ENCODE measurements at regions of chr7 and their contacts with region 1.

Region 1: DNA sequence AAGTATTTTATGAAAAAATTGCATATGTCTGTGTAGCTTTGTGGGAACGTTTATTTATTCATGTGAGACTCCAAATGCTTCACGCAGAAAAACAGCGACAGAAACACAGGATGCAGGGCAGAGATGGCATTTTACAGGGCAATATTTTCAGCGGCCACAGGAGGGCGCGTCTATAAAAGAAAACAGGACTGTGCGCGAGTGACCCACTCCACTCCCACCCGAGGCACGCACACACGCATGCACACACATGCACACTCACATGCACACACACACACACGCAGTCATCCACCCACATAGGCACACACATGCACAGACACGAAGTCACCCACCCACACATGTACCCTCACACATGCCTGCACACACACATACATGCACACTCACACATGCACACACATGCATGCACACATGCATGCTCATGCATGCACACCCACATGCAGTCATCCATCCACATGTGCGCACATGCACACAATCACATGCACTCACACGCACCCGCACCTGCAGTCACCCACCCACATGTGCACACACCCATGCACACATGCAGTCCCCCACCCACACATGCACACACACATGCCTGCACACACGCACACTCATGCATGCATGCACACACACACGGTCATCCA is 96.3 kb downstream of the DNAJB6 start:
- DNase-seq: peak; percentile 77
- ATAC-seq: peak; percentile 67
- H3K4me3 Mint-ChIP-seq: peak overlapping the region; percentile 41
- H3K27ac Mint-ChIP-seq: no peak overlapping the region
- H3K4me1 Mint-ChIP-seq: peaks cover 13% of the 10 kb centered on the region
- H3K27me3 Mint-ChIP-seq: no peaks in the 10 kb centered on the region

Region 2: GRCh38 chr7:157418204-157419034 is 14.6 kb before region 1 on chr7:
- CTCF ChIA-PET with region 1: no interaction called
- POLR2A ChIA-PET with region 1: no interaction called
- intact Hi-C with region 1: no loop called
- DNase-seq: no peak
- ATAC-seq: no peak
- H3K4me3 Mint-ChIP-seq: no peak overlapping the region
- H3K27ac Mint-ChIP-seq: no peak overlapping the region
- H3K4me1 Mint-ChIP-seq: no peaks in the 10 kb centered on the region
- H3K27me3 Mint-ChIP-seq: no peaks in the 10 kb centered on the region

Region 3: DNA sequence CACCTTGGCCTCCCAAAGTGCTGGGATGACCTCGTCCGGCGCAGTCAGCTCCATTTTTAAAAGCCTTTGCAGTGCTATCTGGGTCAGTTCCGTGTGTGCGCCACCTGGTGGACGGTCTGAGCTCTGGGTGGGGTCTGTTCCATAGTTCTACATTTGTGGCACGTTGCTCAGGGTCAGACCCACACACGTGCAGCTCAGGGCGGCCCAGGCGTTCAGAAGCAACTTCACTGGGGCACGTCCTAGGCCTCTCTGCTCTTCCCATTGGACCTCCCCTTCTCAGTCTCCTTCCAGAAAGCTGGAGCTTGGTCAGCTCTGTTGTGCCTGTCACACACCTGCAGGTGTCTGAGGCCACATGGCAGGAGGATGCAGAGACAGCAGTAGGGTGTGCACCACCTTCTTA is 41.6 kb after region 1 on chr7:
- CTCF ChIA-PET with region 1: interaction called, 7 read pairs
- POLR2A ChIA-PET with region 1: no interaction called
- intact Hi-C with region 1: loop called in 1 of 2 experiments (anchors 5 kb)
- DNase-seq: peak; percentile 62
- ATAC-seq: no peak
- H3K4me3 Mint-ChIP-seq: no peak overlapping the region
- H3K27ac Mint-ChIP-seq: no peak overlapping the region
- H3K4me1 Mint-ChIP-seq: peaks cover 53% of the 10 kb centered on the region
- H3K27me3 Mint-ChIP-seq: no peaks in the 10 kb centered on the region

Region 4: DNA sequence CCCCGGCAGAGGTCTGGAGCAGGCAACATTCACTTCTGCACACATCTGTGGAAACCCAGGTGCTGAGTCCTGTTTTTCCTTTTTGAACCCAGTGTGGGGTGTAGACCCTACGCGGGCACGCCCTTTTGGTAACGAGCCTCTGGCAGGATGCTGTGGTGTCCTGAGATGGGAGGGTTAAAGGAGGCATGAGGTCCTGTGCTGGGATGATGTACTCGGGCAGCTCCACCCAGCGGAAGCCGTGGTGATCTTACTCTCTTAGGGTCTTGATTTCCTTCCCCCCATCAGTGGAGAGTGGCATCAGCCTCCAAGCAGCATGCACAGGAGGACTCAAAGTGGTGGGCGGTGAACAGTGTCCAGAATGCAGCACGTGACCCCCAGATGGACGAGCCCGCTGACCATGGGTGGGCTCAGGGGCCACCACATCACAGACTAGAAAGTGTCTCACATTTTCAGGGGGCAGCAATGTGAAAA is 52.3 kb after region 1 on chr7:
- CTCF ChIA-PET with region 1: no interaction called
- POLR2A ChIA-PET with region 1: no interaction called
- intact Hi-C with region 1: no loop called
- DNase-seq: no peak
- ATAC-seq: no peak
- H3K4me3 Mint-ChIP-seq: no peak overlapping the region
- H3K27ac Mint-ChIP-seq: no peak overlapping the region
- H3K4me1 Mint-ChIP-seq: peaks cover 11% of the 10 kb centered on the region
- H3K27me3 Mint-ChIP-seq: no peaks in the 10 kb centered on the region

Region 5: DNA sequence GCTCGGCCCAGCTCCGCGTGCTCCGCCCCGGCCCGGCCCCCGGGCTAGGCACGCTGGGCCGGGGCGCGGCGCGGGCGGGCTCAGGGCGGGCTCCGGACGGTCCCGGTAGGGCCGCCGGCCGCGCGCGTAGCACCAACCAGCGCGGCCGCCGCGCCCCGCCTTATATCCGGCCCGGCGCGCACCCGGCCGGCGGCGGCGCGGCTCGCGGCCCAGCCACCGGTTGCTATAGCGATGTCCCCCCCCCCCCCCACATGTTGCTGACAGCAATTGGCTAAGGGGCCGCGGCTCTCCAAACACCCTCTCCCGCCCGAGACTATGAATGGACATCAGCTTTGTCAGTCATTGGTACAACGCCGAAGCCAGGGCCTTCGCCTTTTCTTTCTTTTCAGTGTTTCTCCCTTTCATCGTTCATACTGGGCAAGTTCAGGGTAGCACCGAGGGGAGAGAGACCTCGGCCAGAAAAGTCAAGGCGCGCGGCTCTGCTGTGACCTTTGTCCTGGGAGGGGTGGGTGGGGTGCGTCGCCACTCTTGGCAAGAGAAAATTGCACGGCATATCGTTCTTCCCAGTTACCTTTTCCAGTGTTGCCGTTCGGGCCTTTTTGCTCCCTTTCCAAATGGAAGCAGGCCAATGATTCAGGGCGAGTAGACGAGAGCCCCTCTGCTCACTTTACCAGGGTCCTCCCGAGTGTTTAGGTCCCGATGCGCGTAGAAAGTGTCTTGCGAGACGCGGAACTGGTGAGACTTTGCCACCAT is 257.9 kb after region 1 on chr7:
- CTCF ChIA-PET with region 1: no interaction called
- POLR2A ChIA-PET with region 1: no interaction called
- intact Hi-C with region 1: loop called in 1 of 2 experiments (anchors 1 kb)
- DNase-seq: no peak
- ATAC-seq: peak; percentile 47
- H3K4me3 Mint-ChIP-seq: peak overlapping the region; percentile 19
- H3K27ac Mint-ChIP-seq: no peak overlapping the region
- H3K4me1 Mint-ChIP-seq: peaks cover 18% of the 10 kb centered on the region
- H3K27me3 Mint-ChIP-seq: peaks cover 49% of the 10 kb centered on the region

Region 6: DNA sequence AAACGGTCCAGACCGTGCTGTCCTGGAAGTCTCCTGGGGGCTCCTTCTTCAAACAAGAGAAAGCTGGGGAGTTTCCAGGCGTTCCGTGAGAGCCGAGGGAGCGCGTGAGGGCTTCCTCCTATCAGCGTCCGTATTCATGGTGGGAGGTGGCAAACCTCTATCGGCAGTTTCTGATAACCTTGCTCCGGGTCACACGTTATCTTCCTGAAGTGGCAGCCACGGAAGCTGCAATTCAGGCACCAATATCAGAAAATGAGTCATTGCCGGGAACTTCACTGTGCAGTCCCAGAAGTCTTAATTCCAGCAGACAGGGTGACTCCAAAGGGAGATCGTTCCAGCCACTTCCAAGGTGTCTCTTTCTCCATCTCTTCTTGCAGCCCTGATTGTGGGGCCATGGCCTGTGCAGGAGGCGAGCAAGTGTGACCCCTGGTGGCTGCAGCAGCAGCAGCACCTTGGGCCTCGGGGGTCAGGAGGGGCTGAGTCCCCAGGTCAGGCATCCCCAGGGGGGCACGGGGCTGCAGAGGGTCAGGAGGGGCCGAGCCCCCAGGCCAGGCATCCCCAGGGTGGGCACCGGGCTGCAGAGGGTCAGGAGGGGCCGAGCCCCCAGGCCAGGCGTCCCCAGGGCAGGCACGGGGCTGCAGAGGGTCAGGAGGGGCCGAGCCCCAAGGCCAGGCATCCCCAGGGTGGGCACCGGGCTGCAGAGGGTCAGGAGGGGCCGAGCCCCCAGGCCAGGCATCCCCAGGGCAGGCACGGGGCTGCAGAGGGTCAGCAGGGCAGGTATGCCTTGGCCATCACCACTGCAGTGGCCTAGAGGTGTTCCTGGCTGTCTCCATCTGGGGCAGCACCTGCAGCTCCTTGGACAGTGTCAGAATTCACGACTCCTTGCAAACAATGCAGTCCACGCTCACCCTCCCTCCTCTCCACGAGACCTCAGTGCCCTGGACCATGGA is 442.4 kb after region 1 on chr7:
- CTCF ChIA-PET with region 1: interaction called, 8 read pairs
- POLR2A ChIA-PET with region 1: no interaction called
- intact Hi-C with region 1: loop called (anchors 1 kb)
- DNase-seq: peak; percentile 76
- ATAC-seq: peak; percentile 83
- H3K4me3 Mint-ChIP-seq: peak overlapping the region; percentile 57
- H3K27ac Mint-ChIP-seq: peak overlapping the region; percentile 2
- H3K4me1 Mint-ChIP-seq: peaks cover 29% of the 10 kb centered on the region
- H3K27me3 Mint-ChIP-seq: peaks cover 2% of the 10 kb centered on the region

Region 7: DNA sequence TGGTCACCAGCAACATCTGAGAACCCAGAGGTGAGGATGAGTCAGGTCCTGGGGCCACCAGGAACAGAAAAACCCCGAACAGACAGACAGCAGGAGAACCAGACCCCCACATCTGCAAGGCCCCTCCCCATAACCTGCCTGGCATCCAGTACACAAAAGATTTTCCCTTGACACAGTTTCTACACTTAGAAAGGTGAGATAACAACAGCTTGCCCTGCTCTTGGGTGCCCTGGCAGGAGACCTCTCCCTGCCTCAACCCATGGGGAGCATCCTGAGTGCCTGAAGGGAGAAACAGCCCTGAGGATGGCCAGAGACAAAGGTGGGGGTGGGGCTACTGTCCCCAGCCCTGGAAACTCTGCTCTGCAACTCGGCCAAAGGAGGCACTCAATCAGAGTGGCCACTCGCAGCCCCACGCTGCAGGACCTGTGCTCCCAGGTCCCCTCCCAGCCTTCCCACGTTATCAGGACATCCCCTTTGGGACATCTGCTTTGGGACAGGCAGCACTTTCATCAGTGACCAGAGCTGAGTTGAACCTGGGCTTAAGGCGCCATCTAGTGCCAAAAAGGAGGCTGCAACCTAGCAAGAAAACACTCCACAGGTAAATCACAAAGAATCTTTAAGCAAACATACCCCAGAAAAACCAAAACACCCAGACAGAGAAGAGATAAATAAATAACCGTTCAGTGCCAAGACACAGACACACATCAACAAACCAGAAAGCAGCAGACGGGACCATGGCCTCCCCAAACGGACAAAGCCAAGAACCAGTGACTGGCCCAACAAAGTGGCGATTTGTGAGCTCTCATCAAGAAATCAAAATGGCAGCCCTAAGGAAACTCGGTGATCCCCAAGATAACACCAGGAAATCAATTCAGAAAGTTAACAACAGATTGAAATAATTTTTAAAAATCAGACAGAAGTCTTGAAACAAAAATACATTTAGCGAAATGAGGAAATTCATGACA is 920.8 kb after region 1 on chr7:
- CTCF ChIA-PET with region 1: no interaction called
- POLR2A ChIA-PET with region 1: no interaction called
- intact Hi-C with region 1: loop called in 1 of 2 experiments (anchors 5 kb)
- DNase-seq: peak; percentile 39
- ATAC-seq: no peak
- H3K4me3 Mint-ChIP-seq: no peak overlapping the region
- H3K27ac Mint-ChIP-seq: no peak overlapping the region
- H3K4me1 Mint-ChIP-seq: no peaks in the 10 kb centered on the region
- H3K27me3 Mint-ChIP-seq: peaks cover 4% of the 10 kb centered on the region